Ascending aorta (tissue), 2 donors: ENCODE measurements at regions of chrX and their contacts with region 1.

Region 1: DNA sequence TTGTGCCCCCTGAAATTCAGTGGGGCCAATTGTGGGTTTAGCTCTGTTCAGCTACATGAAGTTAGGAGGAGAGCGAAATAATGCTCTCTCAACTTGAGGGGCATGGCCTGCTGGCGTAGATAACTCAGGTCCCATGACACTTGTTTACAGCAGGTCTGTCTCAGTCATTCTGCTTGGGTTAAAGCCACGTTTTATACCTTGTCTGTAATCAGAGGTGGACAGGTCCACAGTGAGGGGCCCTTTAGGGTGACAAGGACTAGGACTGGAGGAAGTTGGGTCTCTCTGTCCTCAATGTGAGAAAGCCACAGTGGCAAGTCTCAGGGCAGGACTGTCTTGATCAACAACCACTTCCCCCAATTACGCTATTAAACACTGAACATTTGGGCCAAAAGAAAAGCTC is 49.0 kb downstream of the PDHA1 start:
- DNase-seq: no peak
- H3K4me3 ChIP-seq: no peak overlapping the region
- H3K27ac ChIP-seq: no peak overlapping the region
- H3K4me1 ChIP-seq: no peaks in the 10 kb centered on the region
- H3K27me3 ChIP-seq: no peaks in the 10 kb centered on the region
- CTCF ChIP-seq: no peak

Region 2: DNA sequence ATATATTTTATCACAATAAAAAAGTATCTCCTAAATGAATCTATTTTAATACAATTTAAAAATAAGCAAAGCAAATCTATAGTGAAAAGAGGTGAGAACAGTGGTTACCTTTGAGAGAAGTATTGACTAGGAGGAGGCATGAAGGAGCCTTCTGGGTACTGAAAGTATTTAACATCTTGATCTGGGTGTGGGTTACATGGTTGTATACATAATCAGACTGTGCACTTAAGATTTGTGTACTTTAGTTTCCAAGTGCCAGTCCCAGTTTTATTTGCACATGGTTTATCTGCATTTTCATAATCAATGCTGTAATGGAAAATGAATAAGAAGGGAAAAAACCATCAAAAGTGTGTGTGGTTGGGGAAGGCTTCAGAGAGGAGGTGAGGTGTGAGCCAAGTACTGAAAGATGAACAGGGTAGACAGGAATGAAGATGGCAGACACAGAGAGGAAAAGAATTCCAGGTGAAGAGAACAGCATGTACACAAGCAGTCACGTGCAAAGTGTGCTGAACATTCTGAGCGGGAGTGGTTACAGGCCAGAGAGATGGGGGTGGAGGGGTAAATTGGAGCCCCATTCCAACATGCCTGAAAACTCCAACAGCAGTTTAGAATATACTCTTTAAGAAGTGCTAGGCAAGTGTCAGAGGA is 709.4 kb after region 1 on chrX:
- intact Hi-C with region 1: loop called (anchors 10 kb)
- DNase-seq: no peak
- H3K4me3 ChIP-seq: no peak overlapping the region
- H3K27ac ChIP-seq: no peak overlapping the region
- H3K4me1 ChIP-seq: no peaks in the 10 kb centered on the region
- H3K27me3 ChIP-seq: no peaks in the 10 kb centered on the region
- CTCF ChIP-seq: no peak